ENCODE measurements at regions of chr18 and their contacts with region 1.

Region 1: DNA sequence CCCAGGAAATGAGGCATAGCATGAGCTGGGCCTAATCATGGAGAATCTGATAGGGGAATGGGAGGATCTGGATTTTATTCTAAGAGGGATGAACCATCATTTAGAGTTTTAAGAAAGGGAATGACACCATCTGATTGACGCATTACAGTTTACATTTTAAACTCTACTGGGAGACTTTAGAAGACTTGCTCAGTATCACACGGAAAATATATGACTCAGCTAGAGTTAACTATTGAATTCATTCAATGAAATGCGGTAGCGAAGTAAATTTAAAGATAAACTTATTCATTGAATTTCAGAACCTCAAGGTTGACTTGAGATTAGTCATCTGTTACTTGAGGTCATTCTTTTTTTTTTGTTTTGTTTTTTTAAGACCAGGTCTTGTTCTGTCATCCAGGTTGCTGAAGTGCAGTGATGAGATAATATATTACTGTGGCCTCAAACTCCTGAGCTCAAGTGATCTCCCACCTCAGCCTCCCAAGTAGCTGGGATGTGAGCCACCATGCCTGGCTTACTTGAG is 25.0 kb downstream of the MC4R start:
- DNase-seq: no peak
- H3K4me3 ChIP-seq: no peak overlapping the region
- H3K27ac ChIP-seq: no peak overlapping the region
- H3K4me1 ChIP-seq: no peaks in the 10 kb centered on the region
- H3K27me3 ChIP-seq: no peaks in the 10 kb centered on the region
- CTCF ChIP-seq: no peak
- EP300 ChIP-seq: no peak
- POLR2A ChIP-seq: no peak

Region 2: GRCh38 chr18:60100778-60101177 is 246.8 kb before region 1 on chr18:
- in situ Hi-C with region 1: no loop called
- intact Hi-C with region 1: loop called (anchors 5 kb)
- DNase-seq: no peak
- H3K4me3 ChIP-seq: no peak overlapping the region
- H3K27ac ChIP-seq: no peak overlapping the region
- H3K4me1 ChIP-seq: no peaks in the 10 kb centered on the region
- H3K27me3 ChIP-seq: no peaks in the 10 kb centered on the region
- CTCF ChIP-seq: no peak
- EP300 ChIP-seq: no peak
- POLR2A ChIP-seq: no peak

Region 3: DNA sequence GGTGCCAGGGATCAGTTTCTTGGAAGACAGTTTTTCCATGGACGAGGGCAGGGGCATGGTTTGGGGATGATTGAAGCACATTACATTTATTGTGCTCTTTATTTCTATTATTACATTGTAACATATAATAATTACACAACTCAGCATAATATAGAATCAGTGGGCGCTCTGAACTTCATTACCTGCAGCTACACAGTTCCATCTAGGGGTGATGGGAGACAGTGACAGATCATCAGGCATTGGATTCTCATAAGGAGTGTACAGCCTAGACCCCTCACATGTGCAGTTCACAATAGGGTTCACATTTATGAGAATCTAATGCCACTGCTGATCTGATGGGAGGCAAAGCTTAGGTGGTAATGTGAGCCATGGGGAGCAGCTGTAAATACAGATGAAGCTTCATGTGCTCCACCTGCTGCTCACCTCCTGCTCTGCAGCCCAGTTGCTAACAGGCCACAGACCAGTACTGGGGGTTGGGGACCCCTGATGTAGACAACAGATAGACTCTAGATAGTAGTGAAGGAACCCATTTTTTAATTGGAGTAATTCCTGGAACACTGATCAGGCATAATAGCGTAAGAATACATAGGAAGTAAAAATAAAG is 66.5 kb after region 1 on chr18:
- in situ Hi-C with region 1: no loop called
- intact Hi-C with region 1: no loop called
- DNase-seq: peak; percentile 14
- H3K4me3 ChIP-seq: no peak overlapping the region
- H3K27ac ChIP-seq: no peak overlapping the region
- H3K4me1 ChIP-seq: no peaks in the 10 kb centered on the region
- H3K27me3 ChIP-seq: no peaks in the 10 kb centered on the region
- CTCF ChIP-seq: peak in 4 of 5 experiments; percentile 17 to 30 (median 19)
- EP300 ChIP-seq: no peak
- POLR2A ChIP-seq: no peak

Region 4: DNA sequence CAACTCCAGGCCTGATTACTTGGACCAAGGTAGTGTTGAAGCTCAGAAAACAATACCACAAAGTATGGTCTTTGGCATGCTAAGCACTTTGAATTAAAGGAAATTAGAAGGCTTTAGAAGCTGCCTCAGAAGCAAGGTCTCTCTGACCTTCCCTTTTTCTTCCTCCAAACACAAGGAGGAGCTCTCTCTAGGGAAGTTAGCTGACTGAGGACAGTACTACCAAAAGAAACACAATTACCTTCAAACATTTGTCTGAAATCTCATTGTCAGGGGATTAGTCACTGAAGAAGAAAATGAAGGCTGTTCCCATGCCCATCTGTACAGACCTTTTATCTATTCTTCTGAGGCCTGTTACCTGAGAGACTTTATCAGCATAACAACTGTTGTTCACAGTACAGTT is 1264.9 kb after region 1 on chr18:
- in situ Hi-C with region 1: no loop called
- intact Hi-C with region 1: loop called (anchors 5 kb)
- DNase-seq: no peak
- H3K4me3 ChIP-seq: no peak overlapping the region
- H3K27ac ChIP-seq: no peak overlapping the region
- H3K4me1 ChIP-seq: no peaks in the 10 kb centered on the region
- H3K27me3 ChIP-seq: no peaks in the 10 kb centered on the region
- CTCF ChIP-seq: no peak
- EP300 ChIP-seq: no peak
- POLR2A ChIP-seq: no peak